Activated B cell treated with CpG ODN at 0.5 μM for 24 hours (primary cell): ENCODE measurements at regions of chr12 and their contacts with region 1.

Region 1: DNA sequence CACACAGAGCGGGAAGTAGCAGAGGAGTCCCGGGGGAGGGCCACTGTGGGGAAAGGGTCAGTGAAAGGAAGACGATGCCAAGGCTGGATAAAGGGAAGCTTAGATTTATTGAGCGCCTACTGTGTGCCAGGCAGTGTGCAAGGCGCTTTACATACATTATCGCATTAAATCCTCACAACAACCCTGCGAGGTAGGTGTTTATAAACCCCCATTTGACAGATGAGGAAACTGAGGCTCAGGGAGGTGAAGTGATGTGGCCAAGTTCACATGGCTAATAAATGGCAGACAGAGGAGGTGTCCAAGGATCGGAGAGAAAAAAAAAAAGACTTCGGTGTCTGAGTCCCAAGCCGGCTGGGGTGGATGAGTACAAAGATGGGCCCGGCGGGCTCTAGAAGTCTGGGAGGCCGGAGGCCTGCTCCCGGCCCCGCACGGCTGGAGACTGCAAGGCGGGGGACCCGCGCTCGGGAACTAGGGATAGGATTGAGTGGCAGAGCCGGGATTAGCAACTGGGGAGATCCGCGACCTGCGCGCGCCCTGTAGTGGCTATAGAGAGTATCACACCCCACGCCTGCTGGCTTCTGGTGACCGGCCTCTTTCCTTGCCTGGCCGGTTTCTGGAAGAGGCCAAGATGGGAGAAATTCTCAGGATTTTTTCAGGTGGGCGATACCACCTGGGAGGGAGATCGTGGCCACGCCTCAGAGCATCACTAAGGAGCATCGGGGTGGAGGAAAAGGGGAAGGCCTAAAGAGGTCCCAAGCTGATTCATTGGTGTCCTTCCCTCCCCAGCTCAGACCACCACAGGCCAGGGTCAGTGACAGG is 3.9 kb downstream of the DDN start:
- DNase-seq: no peak
- ATAC-seq: peak; percentile 23
- H3K4me3 Mint-ChIP-seq: peak overlapping the region; percentile 67
- H3K27ac Mint-ChIP-seq: no peak overlapping the region
- H3K4me1 Mint-ChIP-seq: peaks cover 38% of the 10 kb centered on the region
- H3K27me3 Mint-ChIP-seq: peaks cover 28% of the 10 kb centered on the region
- CTCF ChIP-seq: no peak

Region 2: GRCh38 chr12:48356041-48356768 is 639.1 kb before region 1 on chr12:
- CTCF ChIA-PET with region 1: no interaction called
- POLR2A ChIA-PET with region 1: no interaction called
- intact Hi-C with region 1: no loop called
- DNase-seq: no peak
- ATAC-seq: no peak
- H3K4me3 Mint-ChIP-seq: no peak overlapping the region
- H3K27ac Mint-ChIP-seq: no peak overlapping the region
- H3K4me1 Mint-ChIP-seq: peaks cover 6% of the 10 kb centered on the region
- H3K27me3 Mint-ChIP-seq: no peaks in the 10 kb centered on the region
- CTCF ChIP-seq: no peak

Region 3: DNA sequence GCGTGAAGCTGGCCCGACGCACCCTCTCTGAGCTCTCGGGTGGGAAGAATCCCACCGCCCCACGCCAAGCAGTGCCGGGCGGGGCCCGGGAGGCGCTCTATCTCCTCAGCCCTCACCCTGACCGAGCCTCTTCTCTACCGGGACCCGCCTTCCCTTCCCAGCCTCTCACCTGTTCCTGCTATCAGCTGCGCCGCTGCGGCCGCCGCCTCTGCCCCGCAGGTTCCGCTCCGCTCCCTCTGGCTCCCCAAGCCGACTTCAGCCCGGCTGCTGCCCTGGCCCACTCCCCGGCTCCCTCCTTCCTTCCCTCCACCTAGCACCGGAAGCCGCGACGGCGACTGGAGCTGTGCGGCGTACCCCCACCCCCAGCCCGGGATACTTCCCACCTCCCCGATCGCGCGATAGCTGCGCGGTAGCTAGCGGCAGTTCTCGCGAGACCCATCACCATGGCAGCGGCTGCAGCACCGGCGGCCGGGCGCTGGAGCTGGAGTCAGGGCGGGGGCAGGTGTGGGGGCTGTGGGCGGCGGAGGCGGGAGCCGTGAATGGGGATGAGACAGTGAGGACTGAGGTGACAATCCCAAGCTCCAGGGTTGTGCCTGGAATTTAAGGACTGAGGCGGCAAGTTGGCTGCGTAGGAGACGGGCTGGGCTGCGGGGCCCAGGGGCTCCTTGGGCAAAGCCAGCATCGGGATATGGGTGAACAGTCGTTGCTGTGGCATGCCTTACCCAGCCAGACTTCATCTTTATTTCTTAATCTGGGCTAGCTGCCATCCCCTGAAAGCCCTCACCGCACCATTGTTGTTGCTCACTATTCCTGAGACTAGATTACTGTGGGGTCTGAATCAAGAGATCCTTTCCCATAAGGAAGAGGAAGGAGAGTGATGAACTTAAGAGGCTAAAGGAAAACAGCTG is 37.9 kb before region 1 on chr12 and contains the start of gene ARF3:
- CTCF ChIA-PET with region 1: interaction called, 9 read pairs
- POLR2A ChIA-PET with region 1: interaction called, 13 read pairs
- intact Hi-C with region 1: no loop called
- DNase-seq: peak; percentile 88
- ATAC-seq: peak; percentile 95
- H3K4me3 Mint-ChIP-seq: peak within 1 kb of the TSS; percentile 99
- H3K27ac Mint-ChIP-seq: peak within 1 kb of the TSS; percentile 91
- H3K4me1 Mint-ChIP-seq: peaks cover 41% of the 10 kb centered on the region
- H3K27me3 Mint-ChIP-seq: peaks cover 8% of the 10 kb centered on the region
- CTCF ChIP-seq: no peak
- total RNA-seq, gene ARF3: 113 and 119 TPM in 2 replicates

Region 4: DNA sequence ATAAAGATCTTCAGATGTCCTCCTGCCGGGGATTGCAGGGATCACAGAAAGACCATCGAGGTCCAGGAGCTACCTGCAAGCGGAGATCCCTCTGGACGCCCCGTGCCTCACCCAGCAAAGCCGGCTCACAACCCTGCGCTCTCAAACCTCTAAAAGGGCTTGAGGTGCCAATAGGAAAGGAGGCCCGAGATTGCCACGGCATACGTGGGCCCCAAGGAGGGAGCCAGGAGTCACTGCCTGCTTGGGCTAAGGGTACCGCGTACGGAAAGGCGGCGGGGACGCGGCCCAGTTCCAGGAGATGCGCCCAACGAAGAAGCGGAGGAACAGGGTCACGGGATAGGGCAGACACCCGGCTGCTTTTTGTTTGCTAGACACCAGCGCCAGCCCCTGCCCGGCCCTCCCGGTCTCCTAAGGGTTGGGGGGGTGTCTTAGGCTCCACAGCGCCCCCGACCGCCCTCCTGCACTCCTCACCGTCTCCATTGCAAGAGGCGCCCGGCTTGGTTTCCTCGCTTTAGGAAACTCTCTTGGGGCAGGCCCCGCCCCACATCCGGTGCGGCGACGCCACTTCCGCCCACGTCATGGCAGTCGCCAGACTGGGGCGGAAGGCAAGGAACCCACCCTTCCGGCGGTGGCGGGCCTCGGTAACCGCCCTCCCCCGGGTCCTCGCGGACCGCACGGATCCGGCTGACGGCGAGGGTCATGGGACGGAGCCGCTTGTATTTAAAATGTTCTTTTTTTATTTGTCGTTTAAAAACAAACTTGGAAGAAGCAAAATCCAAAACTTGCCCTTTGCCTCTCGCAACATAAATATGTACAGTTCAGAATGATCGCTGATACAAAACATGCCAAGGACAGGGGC is 23.2 kb after region 1 on chr12 and contains the start of gene PRKAG1:
- CTCF ChIA-PET with region 1: interaction called, 21 read pairs
- POLR2A ChIA-PET with region 1: interaction called, 12 read pairs
- intact Hi-C with region 1: loop called (anchors 1 kb)
- DNase-seq: peak; percentile 97
- ATAC-seq: peak; percentile 86
- H3K4me3 Mint-ChIP-seq: peak within 1 kb of the TSS; percentile 93
- H3K27ac Mint-ChIP-seq: peak within 1 kb of the TSS; percentile 98
- H3K4me1 Mint-ChIP-seq: peaks cover 31% of the 10 kb centered on the region
- H3K27me3 Mint-ChIP-seq: no peaks in the 10 kb centered on the region
- CTCF ChIP-seq: no peak
- total RNA-seq, gene PRKAG1: 55.3 and 70.5 TPM in 2 replicates

Region 5: GRCh38 chr12:49060237-49061156 is 65.2 kb after region 1 on chr12 and contains the start of gene KMT2D:
- CTCF ChIA-PET with region 1: interaction called, 7 read pairs
- POLR2A ChIA-PET with region 1: interaction called, 5 read pairs
- intact Hi-C with region 1: loop called (anchors 2 kb)
- DNase-seq: peak; percentile 83
- ATAC-seq: peak; percentile 67
- H3K4me3 Mint-ChIP-seq: peak within 1 kb of the TSS; percentile 97
- H3K27ac Mint-ChIP-seq: peak within 1 kb of the TSS; percentile 97
- H3K4me1 Mint-ChIP-seq: peaks cover 50% of the 10 kb centered on the region
- H3K27me3 Mint-ChIP-seq: no peaks in the 10 kb centered on the region
- CTCF ChIP-seq: no peak
- total RNA-seq, gene KMT2D: 127 and 136 TPM in 2 replicates

Region 6: GRCh38 chr12:49121047-49121696 is 125.9 kb after region 1 on chr12:
- CTCF ChIA-PET with region 1: no interaction called
- POLR2A ChIA-PET with region 1: no interaction called
- intact Hi-C with region 1: no loop called
- DNase-seq: no peak
- ATAC-seq: no peak
- H3K4me3 Mint-ChIP-seq: no peak overlapping the region
- H3K27ac Mint-ChIP-seq: no peak overlapping the region
- H3K4me1 Mint-ChIP-seq: no peaks in the 10 kb centered on the region
- H3K27me3 Mint-ChIP-seq: no peaks in the 10 kb centered on the region
- CTCF ChIP-seq: no peak

Region 7: DNA sequence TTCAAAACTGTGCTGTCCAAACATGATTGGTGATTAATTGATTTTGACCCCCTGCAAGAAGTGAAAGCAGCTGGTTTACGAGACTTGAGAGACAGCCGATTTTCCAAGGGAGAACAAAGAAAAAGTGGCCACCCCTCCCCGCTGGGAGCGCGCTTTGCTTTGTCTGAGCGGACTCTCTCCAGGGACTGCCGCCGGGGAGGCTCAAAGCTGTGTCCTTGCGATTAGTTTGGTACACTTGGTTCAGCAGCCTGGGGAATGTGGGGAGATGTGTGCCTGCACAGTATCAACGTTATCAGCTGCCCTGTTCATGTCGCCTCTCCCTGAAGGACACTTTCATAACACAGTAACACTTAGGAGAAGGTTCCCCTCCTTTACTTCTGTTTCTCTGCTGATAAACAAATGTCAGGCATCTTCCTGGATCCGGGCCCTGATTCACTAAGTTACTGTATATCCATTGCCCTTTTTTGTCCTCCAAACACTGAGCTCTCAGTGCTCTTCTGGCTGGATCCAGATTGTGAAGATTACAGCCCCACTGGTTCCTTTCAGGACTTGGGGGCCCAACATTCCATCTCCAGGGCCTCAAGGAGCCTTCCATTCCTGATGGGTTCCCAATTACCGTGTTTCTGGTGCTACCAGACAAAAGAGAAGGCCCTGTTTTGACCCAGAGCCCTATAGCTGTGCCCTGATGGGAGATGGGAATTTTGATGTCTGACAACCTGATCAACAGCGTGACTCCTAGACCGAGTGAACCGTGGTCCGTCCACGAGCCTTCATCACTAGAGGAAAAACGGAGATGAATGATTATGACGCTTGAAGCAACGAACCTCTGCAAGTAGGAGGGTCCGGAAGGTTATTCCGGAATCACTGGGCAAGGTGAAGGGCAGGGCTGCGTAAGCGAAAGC is 237.9 kb after region 1 on chr12:
- CTCF ChIA-PET with region 1: interaction called, 4 read pairs
- POLR2A ChIA-PET with region 1: interaction called, 4 read pairs
- intact Hi-C with region 1: loop called (anchors 1 kb)
- DNase-seq: no peak
- ATAC-seq: no peak
- H3K4me3 Mint-ChIP-seq: peak overlapping the region; percentile 93
- H3K27ac Mint-ChIP-seq: peak overlapping the region; percentile 89
- H3K4me1 Mint-ChIP-seq: peaks cover 15% of the 10 kb centered on the region
- H3K27me3 Mint-ChIP-seq: no peaks in the 10 kb centered on the region
- CTCF ChIP-seq: no peak

Region 8: GRCh38 chr12:49342066-49342913 is 347.0 kb after region 1 on chr12:
- CTCF ChIA-PET with region 1: no interaction called
- POLR2A ChIA-PET with region 1: no interaction called
- intact Hi-C with region 1: loop called (anchors 10 kb)
- DNase-seq: peak; percentile 71
- ATAC-seq: peak; percentile 75
- H3K4me3 Mint-ChIP-seq: peak overlapping the region; percentile 67
- H3K27ac Mint-ChIP-seq: no peak overlapping the region
- H3K4me1 Mint-ChIP-seq: peaks cover 53% of the 10 kb centered on the region
- H3K27me3 Mint-ChIP-seq: peaks cover 39% of the 10 kb centered on the region
- CTCF ChIP-seq: peak; percentile 24